Endothelial cell of umbilical vein (primary cell): ENCODE measurements at regions of chr3 and their contacts with region 1.

Region 1: DNA sequence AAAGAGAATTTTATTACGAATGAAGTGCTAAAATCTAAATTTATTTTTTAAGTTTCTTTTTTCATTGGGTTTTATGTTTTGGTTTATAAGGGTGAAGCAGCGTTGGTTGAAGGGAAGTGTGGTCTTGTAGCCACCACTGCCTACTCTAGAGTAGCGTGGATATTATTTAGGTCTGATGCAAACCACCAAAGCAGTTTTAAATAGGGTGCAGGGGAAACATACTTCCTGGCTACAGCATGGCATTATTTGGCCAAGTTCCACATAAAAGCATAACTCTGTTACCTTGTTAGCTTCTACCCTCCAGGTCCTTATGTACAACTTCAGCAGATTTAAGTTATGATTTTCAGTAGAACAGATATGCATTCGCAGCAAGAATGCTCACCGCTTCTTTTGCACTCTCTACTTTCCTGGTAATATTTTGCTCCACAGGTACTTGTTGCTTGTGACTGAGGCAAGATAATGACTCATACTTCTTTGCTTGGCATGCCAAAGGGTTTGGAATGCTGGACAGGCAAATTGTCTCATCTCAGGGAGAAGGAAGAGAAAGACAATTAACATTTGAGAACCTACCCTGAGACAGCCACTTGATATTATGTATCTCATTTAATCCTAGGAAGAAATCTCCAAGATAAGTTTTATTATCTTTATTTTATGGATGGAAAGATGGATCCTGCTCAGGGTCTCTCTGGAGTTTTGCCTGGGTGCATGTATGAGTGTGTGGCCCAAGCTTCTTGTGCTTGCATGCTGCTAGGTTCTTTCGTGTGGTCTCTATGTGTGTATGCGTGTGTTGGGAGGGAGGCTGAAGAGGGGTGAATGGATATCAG is 5.4 kb downstream of the TGFBR2 start:
- DNase-seq: no peak
- H3K4me3 ChIP-seq: peak overlapping the region in 1 of 3 experiments; percentile 16
- H3K27ac ChIP-seq: peak overlapping the region; percentile 25
- H3K4me1 ChIP-seq: peaks cover 78% of the 10 kb centered on the region
- H3K27me3 ChIP-seq: no peaks in the 10 kb centered on the region
- CTCF ChIP-seq: no peak
- POLR2A ChIP-seq: no peak

Region 2: DNA sequence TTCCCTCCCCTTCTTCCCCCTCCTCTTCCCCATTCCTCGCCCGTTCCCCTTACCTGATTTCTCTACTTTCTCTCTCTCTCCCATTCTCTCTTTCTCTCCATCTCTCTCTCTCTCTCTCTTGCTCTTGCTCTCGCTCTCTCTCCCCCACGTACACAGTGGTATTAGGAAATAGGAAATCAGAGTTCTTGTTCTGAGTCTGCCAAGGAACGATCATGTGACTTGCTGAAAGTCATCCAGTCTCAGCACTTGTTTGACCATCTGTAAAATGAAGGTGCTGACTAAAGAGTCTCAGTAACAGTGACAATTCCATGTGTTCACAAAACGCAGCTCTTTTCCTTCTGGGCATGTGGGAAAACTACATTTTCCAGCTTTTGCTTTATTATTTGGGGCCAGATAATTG is 450.4 kb before region 1 on chr3:
- CTCF ChIA-PET with region 1: no interaction called
- POLR2A ChIA-PET with region 1: no interaction called
- dilution Hi-C with region 1: no loop called
- intact Hi-C with region 1: loop called (anchors 5 kb)
- DNase-seq: peak; percentile 27
- H3K4me3 ChIP-seq: no peak overlapping the region
- H3K27ac ChIP-seq: no peak overlapping the region
- H3K4me1 ChIP-seq: peaks cover 30% of the 10 kb centered on the region
- H3K27me3 ChIP-seq: peaks cover 0 to 7% of the 10 kb centered on the region in 2 experiments
- CTCF ChIP-seq: no peak
- POLR2A ChIP-seq: no peak

Region 3: GRCh38 chr3:30628901-30629590 is 17.2 kb after region 1 on chr3:
- CTCF ChIA-PET with region 1: interaction called, 6 read pairs
- POLR2A ChIA-PET with region 1: interaction called, 3 read pairs
- dilution Hi-C with region 1: no loop called
- intact Hi-C with region 1: loop called (anchors 1 kb)
- DNase-seq: no peak
- H3K4me3 ChIP-seq: no peak overlapping the region
- H3K27ac ChIP-seq: peak overlapping the region; percentile 39
- H3K4me1 ChIP-seq: peaks cover 87% of the 10 kb centered on the region
- H3K27me3 ChIP-seq: no peaks in the 10 kb centered on the region
- CTCF ChIP-seq: peak in 1 of 2 donors; percentile 6
- POLR2A ChIP-seq: no peak